Activated B cell treated with CpG ODN at 0.5 μM for 24 hours (primary cell): ENCODE measurements at regions of chr11 and their contacts with region 1.

Region 1: GRCh38 chr11:60378354-60378753 is at the start of gene MS4A7:
- DNase-seq: peak; percentile 41
- ATAC-seq: peak; percentile 85
- H3K4me3 Mint-ChIP-seq: peak within 1 kb of the TSS; percentile 90
- H3K27ac Mint-ChIP-seq: peak within 1 kb of the TSS; percentile 99
- H3K4me1 Mint-ChIP-seq: peaks cover 84% of the 10 kb centered on the region
- H3K27me3 Mint-ChIP-seq: no peaks in the 10 kb centered on the region
- CTCF ChIP-seq: no peak
- total RNA-seq, gene MS4A7: 43.1 and 51.1 TPM in 2 replicates

Region 2: GRCh38 chr11:60389279-60389910 is 11.0 kb after region 1 on chr11:
- CTCF ChIA-PET with region 1: no interaction called
- POLR2A ChIA-PET with region 1: interaction called, 15 read pairs
- intact Hi-C with region 1: loop called (anchors 1 kb)
- DNase-seq: no peak
- ATAC-seq: peak; percentile 92
- H3K4me3 Mint-ChIP-seq: peak overlapping the region; percentile 58
- H3K27ac Mint-ChIP-seq: peak overlapping the region; percentile 88
- H3K4me1 Mint-ChIP-seq: peaks cover 49% of the 10 kb centered on the region
- H3K27me3 Mint-ChIP-seq: no peaks in the 10 kb centered on the region
- CTCF ChIP-seq: no peak